Activated CD4-positive, alpha-beta memory T cell treated with anti-CD3 and anti-CD28 coated beads for 36 hours (primary cell): ENCODE measurements at regions of chr5 and their contacts with region 1.

Region 1: GRCh38 chr5:5492087-5492933 is 69.8 kb downstream of the ICE1 start:
- DNase-seq: peak; percentile 40
- H3K4me3 Mint-ChIP-seq: no peak overlapping the region
- H3K27ac Mint-ChIP-seq: no peak overlapping the region
- H3K4me1 Mint-ChIP-seq: peaks cover 14% of the 10 kb centered on the region
- H3K27me3 Mint-ChIP-seq: peaks cover 3% of the 10 kb centered on the region

Region 2: DNA sequence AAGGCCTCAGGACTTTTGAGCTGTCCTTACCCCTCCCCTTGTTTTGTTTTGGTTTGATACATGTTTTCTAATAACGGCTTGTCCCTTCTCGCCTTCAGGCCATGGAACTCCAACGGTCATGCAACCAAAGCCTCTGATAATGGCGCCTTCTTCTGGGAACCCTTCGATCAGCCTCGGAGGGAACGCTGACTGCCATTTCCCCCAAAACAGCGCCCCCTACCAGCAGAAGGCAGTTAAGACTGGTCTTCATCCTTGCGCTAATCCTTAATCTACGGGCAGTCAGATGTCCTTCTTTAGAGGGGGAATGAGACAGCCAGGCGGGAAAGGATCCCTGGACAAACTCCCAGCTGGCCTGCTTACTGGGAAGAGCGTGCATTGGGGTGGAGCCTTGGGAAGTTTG is 206.8 kb after region 1 on chr5:
- CTCF ChIA-PET with region 1: no interaction called
- POLR2A ChIA-PET with region 1: no interaction called
- intact Hi-C with region 1: loop called (anchors 10 kb)
- DNase-seq: no peak
- H3K4me3 Mint-ChIP-seq: no peak overlapping the region
- H3K27ac Mint-ChIP-seq: no peak overlapping the region
- H3K4me1 Mint-ChIP-seq: no peaks in the 10 kb centered on the region
- H3K27me3 Mint-ChIP-seq: peaks cover 3% of the 10 kb centered on the region

Region 3: GRCh38 chr5:6576861-6577501 is 1084.7 kb after region 1 on chr5:
- CTCF ChIA-PET with region 1: interaction called, 3 read pairs
- POLR2A ChIA-PET with region 1: no interaction called
- intact Hi-C with region 1: loop called (anchors 5 kb)
- DNase-seq: peak; percentile 26
- H3K4me3 Mint-ChIP-seq: no peak overlapping the region
- H3K27ac Mint-ChIP-seq: no peak overlapping the region
- H3K4me1 Mint-ChIP-seq: no peaks in the 10 kb centered on the region
- H3K27me3 Mint-ChIP-seq: peaks cover 29% of the 10 kb centered on the region